ENCODE measurements at regions of chr9 and their contacts with region 1.

Region 1: GRCh38 chr9:119126040-119126439 is 243.2 kb downstream of the BRINP1 start:
- ATAC-seq: peak in 1 of 8 experiments; percentile 47
- H3K4me3 ChIP-seq: no peak overlapping the region
- H3K27ac ChIP-seq: no peak overlapping the region
- H3K4me1 ChIP-seq: peaks cover 5 to 8% of the 10 kb centered on the region in 2 donors

Region 2: DNA sequence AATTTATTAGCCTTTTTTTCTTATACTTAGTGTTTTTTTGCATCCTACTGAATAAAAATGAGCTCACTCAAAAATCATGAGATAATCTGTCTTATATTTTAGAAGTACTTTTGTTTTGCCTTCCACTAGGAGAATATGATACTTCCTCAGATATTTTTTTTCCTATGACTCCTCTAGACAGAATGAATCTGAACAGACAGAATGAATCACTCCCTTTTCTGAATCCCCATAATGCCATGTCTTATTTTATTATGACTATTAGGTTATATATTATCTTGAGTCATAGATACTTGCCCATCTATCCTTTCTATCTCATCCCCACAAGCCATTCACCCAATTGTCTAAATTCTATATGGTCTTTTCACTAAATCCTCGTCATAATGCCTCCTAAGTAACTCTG is 108.6 kb after region 1 on chr9:
- in situ Hi-C with region 1: loop called in 1 of 9 experiments (anchors 25 kb)
- ATAC-seq: no peak
- H3K4me3 ChIP-seq: no peak overlapping the region
- H3K27ac ChIP-seq: no peak overlapping the region
- H3K4me1 ChIP-seq: no peaks in the 10 kb centered on the region